ENCODE measurements at regions of chr10 and their contacts with region 1.

Region 1: DNA sequence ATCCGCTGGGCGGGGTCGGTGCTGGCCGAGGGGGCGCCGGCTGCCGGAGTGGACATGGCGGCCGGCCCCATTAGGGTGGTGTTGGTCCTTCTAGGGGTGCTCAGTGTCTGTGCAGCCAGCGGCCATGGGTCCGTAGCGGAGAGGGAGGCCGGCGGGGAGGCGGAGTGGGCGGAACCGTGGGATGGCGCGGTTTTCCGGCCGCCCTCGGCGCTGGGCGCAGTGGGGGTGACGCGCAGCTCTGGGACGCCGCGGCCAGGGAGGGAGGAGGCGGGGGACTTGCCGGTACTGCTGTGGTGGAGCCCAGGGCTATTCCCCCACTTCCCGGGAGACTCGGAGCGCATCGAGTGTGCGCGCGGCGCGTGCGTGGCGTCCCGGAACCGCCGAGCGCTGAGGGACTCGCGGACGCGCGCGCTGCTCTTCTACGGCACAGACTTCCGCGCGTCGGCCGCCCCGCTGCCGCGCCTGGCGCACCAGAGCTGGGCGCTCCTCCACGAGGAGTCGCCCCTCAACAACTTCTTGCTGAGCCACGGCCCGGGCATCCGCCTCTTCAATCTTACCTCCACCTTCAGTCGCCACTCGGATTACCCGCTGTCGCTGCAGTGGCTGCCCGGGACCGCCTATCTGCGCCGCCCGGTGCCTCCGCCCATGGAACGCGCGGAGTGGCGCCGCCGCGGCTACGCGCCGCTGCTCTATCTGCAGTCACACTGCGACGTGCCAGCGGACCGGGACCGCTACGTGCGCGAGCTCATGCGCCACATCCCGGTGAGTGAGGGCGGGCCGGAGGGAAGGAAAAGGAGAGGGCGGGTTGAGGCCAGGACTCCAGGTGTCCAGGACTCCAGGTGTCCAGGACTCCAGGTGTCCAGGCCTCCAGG is 9.3 kb upstream of the CHCHD1 start:
- DNase-seq: peak; percentile 90 to 94 (median 92)
- ATAC-seq: peak; percentile 86
- H3K4me3 ChIP-seq: peak overlapping the region; percentile 74
- H3K27ac ChIP-seq: peak overlapping the region; percentile 91
- H3K4me1 ChIP-seq: peaks cover 21 to 29% of the 10 kb centered on the region in 2 experiments; a peak in 4 of 5 replicates
- H3K27me3 ChIP-seq: no peaks in the 10 kb centered on the region
- CTCF ChIP-seq: peak in 2 of 3 experiments; percentile 22 to 24; a peak in 3 of 6 replicates
- EP300 ChIP-seq: no peak
- POLR2A ChIP-seq: peak; percentile 97
- RAD21 ChIP-seq: peak; percentile 9 to 20; a peak in 2 of 4 replicates

Region 2: GRCh38 chr10:73444457-73444856 is 328.1 kb before region 1 on chr10:
- CTCF ChIA-PET with region 1: no interaction called
- POLR2A ChIA-PET with region 1: no interaction called
- in situ Hi-C with region 1: no loop called
- intact Hi-C with region 1: no loop called
- DNase-seq: no peak
- ATAC-seq: no peak
- H3K4me3 ChIP-seq: no peak overlapping the region
- H3K27ac ChIP-seq: no peak overlapping the region
- H3K4me1 ChIP-seq: no peaks in the 10 kb centered on the region; a peak in 2 of 5 replicates
- H3K27me3 ChIP-seq: no peaks in the 10 kb centered on the region
- CTCF ChIP-seq: no peak
- EP300 ChIP-seq: no peak
- POLR2A ChIP-seq: no peak
- RAD21 ChIP-seq: no peak

Region 3: DNA sequence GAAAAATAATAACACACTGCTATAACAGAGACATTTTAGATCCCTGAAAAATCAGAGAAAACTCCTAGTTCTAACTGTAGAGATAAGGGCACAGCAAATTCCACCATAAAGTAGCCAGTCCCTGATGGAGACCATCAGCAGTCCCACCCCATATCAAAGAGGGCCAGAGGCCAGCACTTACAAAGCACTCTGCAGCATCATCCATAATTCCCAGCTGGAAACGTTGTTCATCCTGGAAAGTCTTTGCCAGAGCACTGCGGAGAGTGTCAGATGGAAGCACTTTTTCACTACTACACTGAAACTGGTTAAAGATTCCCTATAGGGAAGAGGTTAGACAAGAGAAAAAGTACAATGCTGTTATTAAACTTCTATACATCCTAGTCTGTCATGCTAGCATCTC is 227.2 kb before region 1 on chr10:
- CTCF ChIA-PET with region 1: no interaction called
- POLR2A ChIA-PET with region 1: no interaction called
- in situ Hi-C with region 1: no loop called
- intact Hi-C with region 1: no loop called
- DNase-seq: no peak
- ATAC-seq: no peak
- H3K4me3 ChIP-seq: no peak overlapping the region
- H3K27ac ChIP-seq: no peak overlapping the region
- H3K4me1 ChIP-seq: no peaks in the 10 kb centered on the region
- H3K27me3 ChIP-seq: no peaks in the 10 kb centered on the region
- CTCF ChIP-seq: no peak
- EP300 ChIP-seq: no peak
- POLR2A ChIP-seq: no peak
- RAD21 ChIP-seq: no peak

Region 4: GRCh38 chr10:73650537-73651331 is 121.8 kb before region 1 on chr10:
- CTCF ChIA-PET with region 1: no interaction called
- POLR2A ChIA-PET with region 1: no interaction called
- in situ Hi-C with region 1: loop called (anchors 10 kb)
- intact Hi-C with region 1: loop called (anchors 1 kb)
- DNase-seq: peak in 1 of 4 experiments; percentile 14
- ATAC-seq: no peak
- H3K4me3 ChIP-seq: no peak overlapping the region
- H3K27ac ChIP-seq: peak overlapping the region; percentile 40; the same call in 1 of the 3 replicates
- H3K4me1 ChIP-seq: peaks cover 44 to 51% of the 10 kb centered on the region in 2 experiments
- H3K27me3 ChIP-seq: no peaks in the 10 kb centered on the region
- CTCF ChIP-seq: no peak
- EP300 ChIP-seq: no peak
- POLR2A ChIP-seq: no peak
- RAD21 ChIP-seq: no peak

Region 5: GRCh38 chr10:73759512-73760115 is 12.9 kb before region 1 on chr10:
- CTCF ChIA-PET with region 1: no interaction called
- POLR2A ChIA-PET with region 1: interaction called, 137 read pairs
- in situ Hi-C with region 1: no loop called
- intact Hi-C with region 1: no loop called
- DNase-seq: no peak
- ATAC-seq: no peak
- H3K4me3 ChIP-seq: no peak overlapping the region
- H3K27ac ChIP-seq: no peak overlapping the region
- H3K4me1 ChIP-seq: peaks cover 5 to 8% of the 10 kb centered on the region in 2 experiments; a peak in 4 of 5 replicates
- H3K27me3 ChIP-seq: no peaks in the 10 kb centered on the region
- CTCF ChIP-seq: no peak
- EP300 ChIP-seq: no peak
- POLR2A ChIP-seq: no peak
- RAD21 ChIP-seq: no peak

Region 6: GRCh38 chr10:73810735-73811465 is 38.4 kb after region 1 on chr10:
- CTCF ChIA-PET with region 1: no interaction called
- POLR2A ChIA-PET with region 1: interaction called, 12 read pairs
- in situ Hi-C with region 1: no loop called
- intact Hi-C with region 1: loop called (anchors 2 kb)
- DNase-seq: peak; percentile 65 to 87 (median 70)
- ATAC-seq: peak; percentile 57
- H3K4me3 ChIP-seq: peak overlapping the region; percentile 85
- H3K27ac ChIP-seq: peak overlapping the region; percentile 85
- H3K4me1 ChIP-seq: peaks cover 30 to 48% of the 10 kb centered on the region in 2 experiments
- H3K27me3 ChIP-seq: no peaks in the 10 kb centered on the region
- CTCF ChIP-seq: no peak
- EP300 ChIP-seq: no peak
- POLR2A ChIP-seq: no peak
- RAD21 ChIP-seq: no peak

Region 7: DNA sequence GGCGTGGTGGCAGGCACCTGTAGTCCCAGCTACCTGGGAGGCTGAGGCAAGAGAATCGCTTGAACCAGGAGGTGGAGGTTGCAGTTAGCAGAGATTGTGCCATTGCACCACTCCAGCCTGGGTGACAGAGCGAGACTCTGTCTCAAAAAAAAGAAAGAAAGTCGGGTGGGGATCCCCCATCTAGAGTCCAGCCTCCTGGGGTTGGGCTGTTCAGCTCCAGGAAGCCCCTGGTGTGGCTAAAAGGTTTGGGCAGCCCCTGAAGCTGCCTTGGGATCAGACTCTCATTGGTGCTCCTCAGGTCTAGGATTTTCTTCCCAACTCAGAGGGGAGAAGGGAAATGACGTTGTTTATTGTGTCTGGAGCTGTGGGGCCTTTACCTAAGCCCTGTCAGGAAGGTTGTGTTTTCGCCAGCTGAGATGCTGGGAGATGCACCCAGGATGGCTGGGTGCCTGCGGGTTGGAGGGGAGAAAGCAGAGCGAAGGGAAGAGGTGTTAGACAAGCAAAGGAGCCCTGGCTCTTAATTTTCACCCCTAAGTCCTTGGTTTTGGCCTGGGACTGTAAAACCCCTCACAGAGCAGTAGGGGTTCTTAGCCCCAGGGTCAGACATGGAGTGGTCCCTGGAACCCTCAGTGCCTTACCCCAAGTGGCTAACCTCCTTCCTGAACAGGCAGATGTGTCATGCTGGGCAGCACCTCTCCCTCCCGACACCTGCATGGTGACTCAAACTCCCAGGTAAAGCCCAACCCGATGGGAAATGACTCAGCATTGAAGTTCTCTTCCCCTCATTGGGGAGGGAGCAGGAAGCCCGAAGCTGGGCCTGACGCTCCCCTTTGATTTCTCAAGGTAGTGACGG is 159.5 kb after region 1 on chr10:
- CTCF ChIA-PET with region 1: no interaction called
- POLR2A ChIA-PET with region 1: no interaction called
- in situ Hi-C with region 1: no loop called
- intact Hi-C with region 1: loop called (anchors 5 kb)
- DNase-seq: peak; percentile 77 to 87 (median 84)
- ATAC-seq: peak; percentile 73
- H3K4me3 ChIP-seq: no peak overlapping the region
- H3K27ac ChIP-seq: peak overlapping the region; percentile 68
- H3K4me1 ChIP-seq: peaks cover 20 to 36% of the 10 kb centered on the region in 2 experiments
- H3K27me3 ChIP-seq: no peaks in the 10 kb centered on the region
- CTCF ChIP-seq: no peak
- EP300 ChIP-seq: peak; percentile 27; the same call in 1 of the 2 replicates
- POLR2A ChIP-seq: no peak
- RAD21 ChIP-seq: no peak